HCT116 (cell line): ENCODE measurements at regions of chr10 and their contacts with region 1.

Region 1: GRCh38 chr10:95841661-95842498 is 65.9 kb upstream of the CC2D2B start:
- DNase-seq: peak; percentile 50
- ATAC-seq: peak; percentile 80
- H3K4me3 ChIP-seq: no peak overlapping the region
- H3K27ac ChIP-seq: no peak overlapping the region
- H3K4me1 ChIP-seq: no peaks in the 10 kb centered on the region
- H3K27me3 ChIP-seq: 0 out of 2 replicates have a peak, but pooled peaks cover 6% of the 10 kb centered on the region
- CTCF ChIP-seq: peak; percentile 52 to 89 (median 88)
- POLR2A ChIP-seq: no peak
- RAD21 ChIP-seq: peak; percentile 78

Region 2: DNA sequence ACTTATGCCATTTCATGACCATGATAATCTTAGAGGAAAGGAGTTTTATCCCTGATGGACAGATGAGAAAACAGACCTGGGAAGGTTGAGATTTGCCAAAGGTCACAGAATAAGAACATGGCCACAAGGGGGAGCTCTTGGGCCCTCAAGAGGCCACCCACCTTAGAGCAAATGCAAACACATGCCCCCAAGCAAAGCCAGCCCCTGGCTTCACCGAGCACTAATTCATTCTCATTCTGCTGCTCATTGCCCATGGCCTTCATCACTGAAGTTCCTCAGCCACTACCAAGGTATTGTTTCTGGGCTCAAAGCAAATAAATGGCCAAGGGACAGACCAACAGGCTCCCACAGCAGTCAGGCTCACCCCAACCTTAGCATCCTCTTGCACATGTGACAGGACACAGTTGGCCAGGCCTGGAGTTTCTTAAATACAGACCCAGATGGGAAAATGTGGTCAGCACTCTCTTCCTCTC is 595.3 kb before region 1 on chr10:
- CTCF ChIA-PET with region 1: no interaction called
- POLR2A ChIA-PET with region 1: no interaction called
- RAD21 ChIA-PET with region 1: no interaction called
- intact Hi-C with region 1: no loop called
- DNase-seq: peak; percentile 65
- ATAC-seq: peak; percentile 79
- H3K4me3 ChIP-seq: no peak overlapping the region
- H3K27ac ChIP-seq: no peak overlapping the region
- H3K4me1 ChIP-seq: peaks cover 0 to 15% of the 10 kb centered on the region in 2 experiments; a peak in 1 of 4 replicates
- H3K27me3 ChIP-seq: no peaks in the 10 kb centered on the region
- CTCF ChIP-seq: peak; percentile 78 to 84 (median 82)
- POLR2A ChIP-seq: no peak
- RAD21 ChIP-seq: peak; percentile 88

Region 3: GRCh38 chr10:95430231-95430951 is 411.5 kb before region 1 on chr10:
- CTCF ChIA-PET with region 1: interaction called, 8 read pairs
- POLR2A ChIA-PET with region 1: no interaction called
- RAD21 ChIA-PET with region 1: no interaction called
- intact Hi-C with region 1: loop called (anchors 10 kb)
- DNase-seq: peak; percentile 23
- ATAC-seq: peak; percentile 97
- H3K4me3 ChIP-seq: peak overlapping the region in 1 of 2 experiments; percentile 24; a peak in 1 of 4 replicates
- H3K27ac ChIP-seq: no peak overlapping the region
- H3K4me1 ChIP-seq: peaks cover 0 to 5% of the 10 kb centered on the region in 2 experiments; a peak in 1 of 4 replicates
- H3K27me3 ChIP-seq: no peaks in the 10 kb centered on the region
- CTCF ChIP-seq: peak; percentile 94 to 96 (median 94)
- POLR2A ChIP-seq: no peak
- RAD21 ChIP-seq: peak; percentile 96

Region 4: DNA sequence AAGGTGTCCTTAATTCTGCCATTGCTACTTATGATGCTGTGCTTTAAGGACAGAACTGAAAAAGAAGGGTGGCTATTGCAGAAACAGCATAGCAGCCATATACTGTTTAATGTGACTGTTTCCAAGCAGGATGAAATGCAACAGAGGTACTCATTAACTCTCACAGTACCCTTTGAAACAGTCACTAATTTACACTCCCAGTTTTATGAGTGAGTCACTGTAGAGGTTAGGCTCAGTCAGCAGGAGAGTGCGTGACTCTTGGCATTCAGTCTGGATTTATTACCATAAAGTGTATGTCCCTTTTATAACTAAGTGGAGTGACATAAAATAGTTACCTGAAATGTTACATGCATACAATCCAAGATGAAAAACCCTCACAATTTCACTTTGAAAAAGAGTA is 213.1 kb before region 1 on chr10:
- CTCF ChIA-PET with region 1: no interaction called
- POLR2A ChIA-PET with region 1: no interaction called
- RAD21 ChIA-PET with region 1: no interaction called
- intact Hi-C with region 1: loop called (anchors 10 kb)
- DNase-seq: no peak
- ATAC-seq: no peak
- H3K4me3 ChIP-seq: no peak overlapping the region
- H3K27ac ChIP-seq: no peak overlapping the region
- H3K4me1 ChIP-seq: no peaks in the 10 kb centered on the region
- H3K27me3 ChIP-seq: no peaks in the 10 kb centered on the region
- CTCF ChIP-seq: no peak
- POLR2A ChIP-seq: no peak
- RAD21 ChIP-seq: no peak

Region 5: DNA sequence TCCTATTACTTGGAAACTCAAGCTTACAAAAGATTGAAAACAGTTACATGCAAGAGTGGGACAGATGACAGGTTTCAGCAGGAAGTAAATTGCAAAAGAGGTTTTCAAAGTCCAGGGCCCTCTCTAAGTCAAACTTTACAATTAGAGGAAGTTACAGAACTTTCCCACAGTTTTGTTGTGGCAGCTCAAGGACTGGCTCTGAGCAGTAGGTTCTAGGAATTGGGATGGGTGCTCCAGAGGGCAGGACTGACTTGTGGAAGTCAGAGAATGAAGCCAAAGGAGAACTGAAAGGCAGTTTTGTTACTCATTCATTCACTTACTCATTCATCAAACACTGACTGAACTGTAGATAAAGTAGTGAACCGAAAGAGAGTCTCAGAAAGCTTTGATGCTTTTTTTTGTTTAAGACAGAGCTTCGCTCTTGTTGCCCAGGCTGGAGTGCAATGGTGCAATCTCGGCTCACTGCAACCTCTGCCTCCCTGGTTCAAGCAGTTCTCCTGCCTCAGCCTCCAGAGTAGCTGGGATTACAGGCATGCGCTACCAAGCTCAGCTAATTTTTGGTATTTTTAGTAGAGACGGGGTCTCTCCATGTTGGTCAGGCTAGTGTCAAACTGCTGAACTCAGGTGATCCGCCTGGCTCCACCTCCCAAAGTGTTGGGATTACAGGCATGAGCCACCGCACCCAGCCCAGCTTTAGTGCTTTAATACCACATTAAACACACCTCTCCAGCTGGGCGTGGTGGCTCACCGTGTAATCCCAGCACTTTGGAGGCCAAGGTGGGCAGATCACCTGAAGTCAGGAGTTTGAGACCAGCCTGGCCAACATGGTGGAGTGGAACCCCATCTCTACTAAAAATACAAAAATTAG is 134.7 kb after region 1 on chr10:
- CTCF ChIA-PET with region 1: no interaction called
- POLR2A ChIA-PET with region 1: no interaction called
- RAD21 ChIA-PET with region 1: no interaction called
- intact Hi-C with region 1: no loop called
- DNase-seq: no peak
- ATAC-seq: no peak
- H3K4me3 ChIP-seq: no peak overlapping the region
- H3K27ac ChIP-seq: no peak overlapping the region
- H3K4me1 ChIP-seq: no peaks in the 10 kb centered on the region
- H3K27me3 ChIP-seq: no peaks in the 10 kb centered on the region; the same call in 1 of the 2 replicates
- CTCF ChIP-seq: no peak
- POLR2A ChIP-seq: no peak
- RAD21 ChIP-seq: no peak